HepG2 (cell line): ENCODE measurements at regions of chr14 and their contacts with region 1.

Region 1: DNA sequence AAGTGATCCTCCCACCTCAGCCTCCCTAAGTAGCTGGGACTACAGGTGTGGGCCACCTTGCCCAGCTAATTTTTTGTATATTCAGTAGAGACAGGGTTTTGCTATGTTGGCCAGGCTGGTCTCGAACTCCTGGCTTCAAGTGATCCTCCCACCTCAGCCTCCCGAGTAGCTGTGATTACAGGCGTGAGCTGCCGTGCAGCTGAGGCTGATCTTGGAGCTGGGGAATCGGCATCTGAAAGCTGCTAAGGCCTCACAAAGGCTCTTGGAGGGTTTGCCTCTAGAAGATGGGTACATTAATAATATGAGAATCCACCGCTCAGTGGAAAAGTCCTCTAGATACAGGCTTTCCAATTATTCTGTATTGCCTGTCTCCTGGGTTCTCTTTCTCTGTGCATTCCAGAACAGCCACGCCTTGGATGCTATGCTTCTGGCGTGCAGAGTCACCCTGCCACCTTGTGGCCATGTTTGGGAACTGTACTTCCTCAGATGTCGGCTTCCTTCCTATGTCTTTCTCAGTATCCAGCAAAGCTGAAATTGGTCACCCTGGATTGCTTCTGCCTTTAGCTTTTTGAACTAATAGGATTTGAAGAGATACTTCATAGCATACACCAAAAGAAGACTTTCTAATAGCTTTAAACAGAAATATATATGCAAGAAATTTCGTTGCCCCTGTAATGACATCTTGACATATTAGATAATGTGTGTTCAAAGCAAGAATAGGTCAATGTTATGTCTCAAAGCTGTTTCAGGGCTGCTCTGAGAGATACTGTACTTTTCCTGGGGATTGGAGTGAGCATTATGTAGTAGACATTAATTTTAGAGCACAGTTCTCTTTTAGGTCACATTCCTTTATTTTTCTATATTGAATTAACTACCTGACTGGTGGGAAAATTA is 75.4 kb downstream of the SNAPC1 start:
- DNase-seq: peak; percentile 62
- ATAC-seq: peak; percentile 99
- H3K4me3 ChIP-seq: no peak overlapping the region
- H3K27ac ChIP-seq: no peak overlapping the region
- H3K4me1 ChIP-seq: no peaks in the 10 kb centered on the region
- H3K27me3 ChIP-seq: no peaks in the 10 kb centered on the region
- CTCF ChIP-seq: peak; percentile 94
- EP300 ChIP-seq: no peak
- POLR2A ChIP-seq: no peak
- RAD21 ChIP-seq: peak; percentile 88

Region 2: GRCh38 chr14:61269321-61270083 is 568.1 kb before region 1 on chr14:
- CTCF ChIA-PET with region 1: interaction called, 6 read pairs
- POLR2A ChIA-PET with region 1: no interaction called
- in situ Hi-C with region 1: no loop called
- intact Hi-C with region 1: loop called (anchors 1 kb)
- DNase-seq: peak; percentile 75
- ATAC-seq: peak; percentile 89
- H3K4me3 ChIP-seq: peak overlapping the region in 2 of 3 experiments; percentile 7 to 67; a peak in 4 of 6 replicates
- H3K27ac ChIP-seq: no peak overlapping the region
- H3K4me1 ChIP-seq: peaks cover 14% of the 10 kb centered on the region; the same call in 1 of the 2 replicates
- H3K27me3 ChIP-seq: no peaks in the 10 kb centered on the region; a peak in 1 of 5 replicates
- CTCF ChIP-seq: peak; percentile 88
- EP300 ChIP-seq: 0 out of 4 replicates have a peak, but pooled peaks of 1 of the 2 experiments have one; percentile 5
- POLR2A ChIP-seq: no peak
- RAD21 ChIP-seq: peak; percentile 70

Region 3: DNA sequence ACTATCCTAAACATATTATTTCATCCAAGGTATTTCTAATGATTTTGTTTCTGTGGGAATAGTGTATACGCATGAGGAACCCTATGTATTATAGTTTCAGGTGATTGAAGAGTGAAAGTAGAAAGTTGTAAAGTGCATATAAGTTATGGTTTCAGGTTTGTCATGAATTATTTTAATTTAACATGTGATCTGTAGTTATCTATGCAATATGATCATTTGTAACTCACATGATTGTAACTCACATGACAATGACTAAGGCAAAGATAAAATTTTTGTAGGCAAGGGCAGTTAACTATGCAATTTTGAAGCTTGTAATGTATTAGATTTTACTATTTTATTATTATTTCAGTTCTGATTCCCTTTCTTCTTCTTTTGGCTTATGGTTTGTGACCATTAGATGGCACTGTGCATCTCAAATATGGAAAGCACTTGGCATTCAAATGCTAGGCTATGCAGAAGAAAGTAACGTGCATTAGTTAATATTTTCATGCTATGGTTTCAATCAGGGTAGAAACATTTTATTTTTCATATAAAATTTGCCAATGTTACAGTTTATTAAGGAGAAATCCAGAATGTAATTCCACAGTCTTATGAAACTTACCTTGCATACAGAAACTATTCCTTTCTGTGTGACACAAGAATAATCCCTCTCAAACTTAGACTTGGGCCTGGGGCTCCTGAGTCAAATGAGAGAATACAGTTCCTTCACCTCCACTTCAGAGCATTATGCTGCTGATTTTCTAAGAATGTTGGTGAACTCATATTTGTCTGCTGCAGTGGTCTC is 540.7 kb before region 1 on chr14:
- CTCF ChIA-PET with region 1: interaction called, 3 read pairs
- POLR2A ChIA-PET with region 1: no interaction called
- in situ Hi-C with region 1: loop called (anchors 25 kb)
- intact Hi-C with region 1: loop called (anchors 1 kb)
- DNase-seq: peak; percentile 20
- ATAC-seq: no peak
- H3K4me3 ChIP-seq: no peak overlapping the region
- H3K27ac ChIP-seq: no peak overlapping the region
- H3K4me1 ChIP-seq: no peaks in the 10 kb centered on the region
- H3K27me3 ChIP-seq: no peaks in the 10 kb centered on the region; a peak in 1 of 5 replicates
- CTCF ChIP-seq: peak; percentile 46
- EP300 ChIP-seq: no peak
- POLR2A ChIP-seq: no peak
- RAD21 ChIP-seq: no peak

Region 4: GRCh38 chr14:61456720-61457119 is 380.9 kb before region 1 on chr14:
- CTCF ChIA-PET with region 1: interaction called, 62 read pairs
- POLR2A ChIA-PET with region 1: no interaction called
- in situ Hi-C with region 1: loop called (anchors 5 kb)
- intact Hi-C with region 1: loop called (anchors 1 kb)
- DNase-seq: peak; percentile 60
- ATAC-seq: peak; percentile 92
- H3K4me3 ChIP-seq: no peak overlapping the region
- H3K27ac ChIP-seq: no peak overlapping the region
- H3K4me1 ChIP-seq: peaks cover 8% of the 10 kb centered on the region
- H3K27me3 ChIP-seq: no peaks in the 10 kb centered on the region; a peak in 2 of 5 replicates
- CTCF ChIP-seq: peak; percentile 86
- EP300 ChIP-seq: no peak
- POLR2A ChIP-seq: no peak
- RAD21 ChIP-seq: peak; percentile 83

Region 5: DNA sequence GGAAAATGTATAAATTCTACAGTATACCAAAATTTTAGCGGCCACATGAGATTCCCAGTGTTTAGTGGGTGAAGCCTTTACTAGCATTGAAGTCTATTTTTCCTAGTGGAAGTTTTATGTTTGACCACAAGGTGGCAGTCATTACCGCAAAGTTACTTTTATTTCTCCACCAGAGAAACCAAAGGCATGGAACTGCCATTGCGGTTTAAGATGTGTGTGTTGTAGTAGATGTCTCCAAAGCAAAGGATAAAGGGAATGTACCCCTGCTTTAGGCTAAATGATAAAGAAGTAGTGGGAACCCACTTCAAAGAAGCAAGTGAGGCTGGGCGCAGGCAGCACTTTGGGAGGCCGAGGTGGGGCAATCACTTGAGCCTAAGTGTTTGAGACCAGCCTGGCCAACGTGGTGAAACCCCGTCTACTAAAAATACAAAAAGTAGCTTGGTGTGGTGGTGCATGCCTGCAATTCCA is 375.7 kb before region 1 on chr14:
- CTCF ChIA-PET with region 1: interaction called, 62 read pairs
- POLR2A ChIA-PET with region 1: no interaction called
- in situ Hi-C with region 1: loop called (anchors 5 kb)
- intact Hi-C with region 1: loop called (anchors 1 kb)
- DNase-seq: peak; percentile 68
- ATAC-seq: peak; percentile 79
- H3K4me3 ChIP-seq: no peak overlapping the region
- H3K27ac ChIP-seq: no peak overlapping the region
- H3K4me1 ChIP-seq: peaks cover 39% of the 10 kb centered on the region
- H3K27me3 ChIP-seq: no peaks in the 10 kb centered on the region; a peak in 1 of 5 replicates
- CTCF ChIP-seq: peak; percentile 79
- EP300 ChIP-seq: no peak
- POLR2A ChIP-seq: no peak
- RAD21 ChIP-seq: peak; percentile 81

Region 6: GRCh38 chr14:61644834-61645233 is 192.7 kb before region 1 on chr14:
- CTCF ChIA-PET with region 1: no interaction called
- POLR2A ChIA-PET with region 1: no interaction called
- in situ Hi-C with region 1: no loop called
- intact Hi-C with region 1: no loop called
- DNase-seq: no peak
- ATAC-seq: no peak
- H3K4me3 ChIP-seq: no peak overlapping the region
- H3K27ac ChIP-seq: no peak overlapping the region
- H3K4me1 ChIP-seq: no peaks in the 10 kb centered on the region
- H3K27me3 ChIP-seq: peaks cover 0 to 18% of the 10 kb centered on the region in 2 experiments; a peak in 2 of 5 replicates
- CTCF ChIP-seq: no peak
- EP300 ChIP-seq: no peak
- POLR2A ChIP-seq: no peak
- RAD21 ChIP-seq: no peak